ENCODE measurements at regions of chr12 and their contacts with region 1.

Region 1: DNA sequence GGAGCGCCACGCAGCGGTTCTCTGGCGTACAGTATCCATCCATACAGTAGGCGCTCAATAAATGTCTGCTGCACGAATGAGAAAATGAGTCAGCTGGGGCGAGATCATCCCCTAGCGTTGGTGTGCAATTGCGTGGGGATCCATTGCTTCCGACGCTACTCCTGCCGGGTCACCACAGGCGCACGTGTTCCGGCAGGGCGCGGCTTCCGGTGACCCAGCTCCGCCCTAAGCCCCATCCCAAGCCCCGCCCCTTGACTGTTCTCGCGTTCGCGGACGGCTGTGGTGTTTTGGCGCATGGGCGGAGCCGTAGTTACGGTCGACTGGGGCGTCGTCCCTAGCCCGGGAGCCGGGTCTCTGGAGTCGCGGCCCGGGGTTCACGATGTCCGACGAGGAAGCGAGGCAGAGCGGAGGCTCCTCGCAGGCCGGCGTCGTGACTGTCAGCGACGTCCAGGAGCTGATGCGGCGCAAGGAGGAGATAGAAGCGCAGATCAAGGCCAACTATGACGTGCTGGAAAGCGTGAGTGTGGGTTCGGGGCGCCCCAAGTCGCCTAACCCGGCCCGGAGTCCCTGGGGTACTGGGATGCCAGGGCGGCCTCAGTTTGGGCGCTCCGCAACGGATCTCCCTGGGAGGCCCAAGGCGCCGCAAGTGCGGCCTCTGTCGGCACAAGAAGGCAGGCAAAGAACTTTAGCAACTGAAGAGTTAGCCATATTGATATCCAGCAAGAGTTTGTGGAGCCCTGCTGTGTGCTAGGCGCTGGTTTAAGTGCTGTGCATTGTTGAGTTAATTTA is at the start of gene PSMD9:
- DNase-seq: peak; percentile 99
- ATAC-seq: peak; percentile 94
- H3K4me3 Mint-ChIP-seq: peak within 1 kb of the TSS; percentile 89
- H3K27ac Mint-ChIP-seq: peak within 1 kb of the TSS; percentile 98
- H3K4me1 Mint-ChIP-seq: peaks cover 33% of the 10 kb centered on the region
- H3K27me3 Mint-ChIP-seq: no peaks in the 10 kb centered on the region
- total RNA-seq, gene PSMD9: 50.4 to 56.2 TPM

Region 2: GRCh38 chr12:121467115-121467793 is 421.4 kb before region 1 on chr12:
- CTCF ChIA-PET with region 1: no interaction called
- POLR2A ChIA-PET with region 1: no interaction called
- intact Hi-C with region 1: loop called in 1 of 2 experiments (anchors 1 kb)
- DNase-seq: peak; percentile 93
- ATAC-seq: peak; percentile 94
- H3K4me3 Mint-ChIP-seq: peak overlapping the region; percentile 57
- H3K27ac Mint-ChIP-seq: no peak overlapping the region
- H3K4me1 Mint-ChIP-seq: peaks cover 20% of the 10 kb centered on the region
- H3K27me3 Mint-ChIP-seq: no peaks in the 10 kb centered on the region

Region 3: GRCh38 chr12:121530600-121531355 is 357.9 kb before region 1 on chr12:
- CTCF ChIA-PET with region 1: no interaction called
- POLR2A ChIA-PET with region 1: no interaction called
- intact Hi-C with region 1: no loop called
- DNase-seq: peak; percentile 81
- ATAC-seq: peak; percentile 69
- H3K4me3 Mint-ChIP-seq: no peak overlapping the region
- H3K27ac Mint-ChIP-seq: peak overlapping the region; percentile 88
- H3K4me1 Mint-ChIP-seq: peaks cover 41% of the 10 kb centered on the region
- H3K27me3 Mint-ChIP-seq: no peaks in the 10 kb centered on the region

Region 4: DNA sequence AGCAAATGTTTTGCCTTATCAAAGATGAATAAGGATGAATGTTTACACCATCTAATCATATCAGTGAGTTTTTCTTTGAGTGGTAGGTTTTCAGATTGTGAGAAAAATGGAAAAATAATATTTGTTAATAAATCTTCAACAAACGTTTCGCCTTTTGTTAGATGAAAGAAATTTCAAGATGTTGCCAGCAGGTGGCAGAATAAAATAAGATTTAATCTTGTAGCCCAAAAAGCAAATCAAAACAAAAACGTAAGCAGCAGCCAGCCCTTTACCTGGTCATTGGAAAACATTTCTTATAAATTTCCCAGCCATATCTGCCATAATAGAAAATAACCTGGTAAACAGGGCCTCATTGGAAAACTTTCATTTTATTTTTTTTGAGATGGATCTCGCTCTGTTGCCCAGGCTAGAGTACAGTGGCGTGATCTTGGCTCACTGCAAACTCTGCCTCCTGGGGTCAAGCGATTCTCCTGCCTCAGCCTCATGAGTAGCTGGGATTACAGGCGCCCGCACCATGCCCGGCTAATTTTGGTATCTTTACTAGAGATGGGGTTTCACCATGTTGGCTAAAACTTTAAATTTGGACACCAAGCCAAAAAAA is 191.5 kb before region 1 on chr12:
- CTCF ChIA-PET with region 1: interaction called, 3 read pairs
- POLR2A ChIA-PET with region 1: no interaction called
- intact Hi-C with region 1: loop called in 1 of 2 experiments (anchors 1 kb)
- DNase-seq: peak; percentile 27
- ATAC-seq: no peak
- H3K4me3 Mint-ChIP-seq: no peak overlapping the region
- H3K27ac Mint-ChIP-seq: no peak overlapping the region
- H3K4me1 Mint-ChIP-seq: no peaks in the 10 kb centered on the region
- H3K27me3 Mint-ChIP-seq: no peaks in the 10 kb centered on the region

Region 5: GRCh38 chr12:121773011-121773777 is 115.5 kb before region 1 on chr12:
- CTCF ChIA-PET with region 1: no interaction called
- POLR2A ChIA-PET with region 1: no interaction called
- intact Hi-C with region 1: loop called in 1 of 2 experiments (anchors 2 kb)
- DNase-seq: peak; percentile 90
- ATAC-seq: peak; percentile 83
- H3K4me3 Mint-ChIP-seq: no peak overlapping the region
- H3K27ac Mint-ChIP-seq: peak overlapping the region; percentile 81
- H3K4me1 Mint-ChIP-seq: peaks cover 11% of the 10 kb centered on the region
- H3K27me3 Mint-ChIP-seq: no peaks in the 10 kb centered on the region

Region 6: GRCh38 chr12:121811434-121812319 is 77.0 kb before region 1 on chr12:
- CTCF ChIA-PET with region 1: interaction called, 11 read pairs
- POLR2A ChIA-PET with region 1: interaction called, 3 read pairs
- intact Hi-C with region 1: loop called in 1 of 2 experiments (anchors 1 kb)
- DNase-seq: peak; percentile 82
- ATAC-seq: peak; percentile 86
- H3K4me3 Mint-ChIP-seq: peak overlapping the region; percentile 73
- H3K27ac Mint-ChIP-seq: peak overlapping the region; percentile 69
- H3K4me1 Mint-ChIP-seq: peaks cover 40% of the 10 kb centered on the region
- H3K27me3 Mint-ChIP-seq: no peaks in the 10 kb centered on the region

Region 7: DNA sequence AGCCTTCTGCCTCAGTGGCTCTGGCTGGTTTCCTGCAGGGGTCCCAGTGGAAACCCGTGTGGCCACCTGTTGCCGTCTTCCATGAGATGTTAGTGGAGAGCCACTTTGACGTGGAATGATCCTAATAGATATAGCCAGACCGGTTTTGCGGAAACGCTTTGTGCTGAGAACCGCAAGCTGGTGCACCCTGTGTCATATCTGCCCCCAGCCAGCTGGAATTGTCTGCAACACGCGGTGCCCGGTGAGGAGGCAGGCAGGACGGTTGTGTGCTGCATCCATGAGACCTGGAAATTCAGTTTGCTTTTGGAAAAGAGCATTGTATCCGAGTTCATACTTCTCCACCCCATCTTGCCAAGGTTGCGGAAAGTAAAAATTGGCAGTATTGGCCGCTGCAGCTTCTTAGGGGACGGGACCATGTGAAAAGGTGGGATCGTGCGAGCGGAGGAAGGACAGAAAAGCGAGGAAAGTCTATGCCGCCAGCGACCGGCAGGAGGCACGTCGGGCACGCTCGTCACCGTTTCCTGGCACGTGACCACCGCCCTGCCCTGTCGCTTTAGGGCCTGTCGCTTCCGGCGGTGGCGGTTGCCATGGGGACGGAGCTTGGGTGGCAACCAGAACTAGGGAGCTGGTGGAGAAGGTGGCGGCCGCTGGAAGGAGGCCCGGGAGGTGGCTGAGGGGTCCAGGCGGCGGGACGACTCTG is 29.5 kb after region 1 on chr12 and contains the start of gene CFAP251:
- CTCF ChIA-PET with region 1: interaction called, 20 read pairs
- POLR2A ChIA-PET with region 1: no interaction called
- intact Hi-C with region 1: loop called in 1 of 2 experiments (anchors 1 kb)
- DNase-seq: peak; percentile 99
- ATAC-seq: peak; percentile 99
- H3K4me3 Mint-ChIP-seq: peak within 1 kb of the TSS; percentile 54
- H3K27ac Mint-ChIP-seq: peak within 1 kb of the TSS; percentile 74
- H3K4me1 Mint-ChIP-seq: peaks cover 15% of the 10 kb centered on the region
- H3K27me3 Mint-ChIP-seq: no peaks in the 10 kb centered on the region
- total RNA-seq, gene CFAP251: 0.59 to 0.65 TPM

Region 8: DNA sequence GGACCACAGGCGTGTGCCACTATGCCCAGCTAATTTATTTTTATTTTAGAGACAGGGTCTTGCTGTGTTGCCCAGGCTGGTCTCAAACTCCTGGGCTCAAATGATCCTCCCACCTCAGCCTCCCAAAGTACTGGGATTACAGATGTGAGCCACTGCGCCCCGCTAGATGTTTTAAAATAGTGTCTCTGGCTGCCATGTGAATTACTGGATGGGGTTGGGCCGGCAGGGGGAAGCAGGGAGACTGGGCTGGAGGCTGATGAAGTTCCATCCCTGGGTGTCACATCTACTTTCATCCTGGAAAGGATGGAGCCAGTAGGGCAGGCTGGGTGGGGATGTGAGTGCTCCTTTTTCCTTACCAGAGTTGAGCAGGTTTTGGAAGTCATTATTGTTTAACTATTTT is 1919.5 kb after region 1 on chr12:
- CTCF ChIA-PET with region 1: no interaction called
- POLR2A ChIA-PET with region 1: no interaction called
- intact Hi-C with region 1: no loop called
- DNase-seq: peak; percentile 10
- ATAC-seq: no peak
- H3K4me3 Mint-ChIP-seq: no peak overlapping the region
- H3K27ac Mint-ChIP-seq: no peak overlapping the region
- H3K4me1 Mint-ChIP-seq: peaks cover 7% of the 10 kb centered on the region
- H3K27me3 Mint-ChIP-seq: peaks cover 18% of the 10 kb centered on the region